IMR-90 (cell line): ENCODE measurements at regions of chr1 and their contacts with region 1.

Region 1: GRCh38 chr1:94335950-94336349 is 82.2 kb upstream of the ABCD3 start:
- DNase-seq: peak; percentile 95
- ATAC-seq: peak; percentile 89
- H3K4me3 ChIP-seq: no peak overlapping the region
- H3K27ac ChIP-seq: no peak overlapping the region
- H3K4me1 ChIP-seq: peaks cover 8% of the 10 kb centered on the region
- H3K27me3 ChIP-seq: peaks cover 16% of the 10 kb centered on the region
- CTCF ChIP-seq: peak; percentile 100
- POLR2A ChIP-seq: peak; percentile 58
- RAD21 ChIP-seq: peak; percentile 100

Region 2: DNA sequence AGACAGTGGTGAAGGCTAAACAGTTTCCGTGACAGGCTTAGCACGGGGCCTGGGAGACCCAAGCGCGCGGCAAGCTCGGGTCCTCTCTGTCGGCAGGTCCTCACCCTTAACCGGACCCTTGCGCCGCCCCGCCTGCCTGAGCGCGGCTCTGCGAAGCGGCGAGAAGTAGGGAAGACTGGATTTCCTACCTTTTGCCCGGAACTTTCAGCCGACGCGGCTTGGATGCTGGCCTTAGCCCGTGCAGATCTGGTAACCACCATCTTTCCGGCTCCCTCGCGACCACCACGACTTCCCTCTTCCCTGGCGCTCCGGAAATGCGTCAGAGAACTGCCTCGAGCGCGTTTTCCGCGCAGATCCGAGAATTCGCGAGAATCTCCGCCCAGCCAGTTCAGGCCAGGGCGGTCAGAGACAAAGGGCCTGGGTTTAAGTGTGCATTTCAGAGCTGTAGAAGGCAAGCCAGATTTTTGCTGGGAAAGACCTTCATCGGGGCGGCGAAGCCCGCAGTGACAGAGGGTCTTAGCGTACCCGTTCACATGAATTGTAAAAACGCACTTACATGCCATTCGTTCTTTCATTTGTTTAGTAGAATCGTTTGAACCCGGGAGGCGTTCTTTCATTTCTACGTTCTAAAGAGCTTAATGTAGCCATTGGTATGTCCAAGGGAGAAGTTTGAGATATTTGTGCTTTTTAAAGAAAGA is 456.9 kb before region 1 on chr1 and contains the start of gene DNTTIP2:
- CTCF ChIA-PET with region 1: no interaction called
- POLR2A ChIA-PET with region 1: interaction called, 3 read pairs
- dilution Hi-C with region 1: no loop called
- in situ Hi-C with region 1: loop called (anchors 25 kb)
- intact Hi-C with region 1: loop called (anchors 1 kb)
- DNase-seq: peak; percentile 87
- ATAC-seq: peak; percentile 94
- H3K4me3 ChIP-seq: peak within 1 kb of the TSS; percentile 89
- H3K27ac ChIP-seq: peak within 1 kb of the TSS; percentile 99
- H3K4me1 ChIP-seq: no peaks in the 10 kb centered on the region; the same call in 1 of the 2 replicates
- H3K27me3 ChIP-seq: no peaks in the 10 kb centered on the region
- CTCF ChIP-seq: no peak
- POLR2A ChIP-seq: peak; percentile 90
- RAD21 ChIP-seq: no peak
- total RNA-seq, gene DNTTIP2: 24.4 and 35.8 TPM in 2 replicates

Region 3: DNA sequence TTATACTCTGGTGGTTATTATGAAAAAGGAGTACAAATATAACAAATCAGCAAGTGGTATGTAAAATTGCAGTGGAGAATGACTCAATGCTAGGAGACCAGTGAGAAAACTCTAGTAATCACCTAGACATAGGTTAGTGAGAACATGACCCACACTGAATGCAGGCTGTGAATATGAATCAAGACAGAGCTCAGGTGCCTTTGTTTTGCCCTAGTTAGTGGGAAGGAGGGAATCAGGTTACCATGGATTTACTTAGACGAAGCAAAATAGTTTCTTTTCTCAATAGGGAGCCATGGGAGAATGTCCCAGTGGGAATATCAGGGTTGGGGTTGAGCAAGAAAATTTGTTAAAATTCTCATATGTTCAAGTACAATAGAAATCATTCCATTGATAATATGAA is 416.2 kb before region 1 on chr1:
- CTCF ChIA-PET with region 1: no interaction called
- POLR2A ChIA-PET with region 1: no interaction called
- dilution Hi-C with region 1: no loop called
- in situ Hi-C with region 1: no loop called
- intact Hi-C with region 1: no loop called
- DNase-seq: no peak
- ATAC-seq: no peak
- H3K4me3 ChIP-seq: no peak overlapping the region
- H3K27ac ChIP-seq: no peak overlapping the region
- H3K4me1 ChIP-seq: no peaks in the 10 kb centered on the region
- H3K27me3 ChIP-seq: peaks cover 8% of the 10 kb centered on the region
- CTCF ChIP-seq: no peak
- POLR2A ChIP-seq: no peak
- RAD21 ChIP-seq: no peak

Region 4: GRCh38 chr1:94025383-94026340 is 310.3 kb before region 1 on chr1:
- CTCF ChIA-PET with region 1: interaction called, 90 read pairs
- POLR2A ChIA-PET with region 1: no interaction called
- dilution Hi-C with region 1: no loop called
- in situ Hi-C with region 1: loop called (anchors 10 kb)
- intact Hi-C with region 1: loop called (anchors 1 kb)
- DNase-seq: peak; percentile 79
- ATAC-seq: peak; percentile 50
- H3K4me3 ChIP-seq: no peak overlapping the region
- H3K27ac ChIP-seq: no peak overlapping the region
- H3K4me1 ChIP-seq: peaks cover 15% of the 10 kb centered on the region
- H3K27me3 ChIP-seq: no peaks in the 10 kb centered on the region
- CTCF ChIP-seq: peak; percentile 83
- POLR2A ChIP-seq: no peak
- RAD21 ChIP-seq: peak; percentile 81

Region 5: GRCh38 chr1:94045465-94046056 is 290.4 kb before region 1 on chr1:
- CTCF ChIA-PET with region 1: interaction called, 64 read pairs
- POLR2A ChIA-PET with region 1: no interaction called
- dilution Hi-C with region 1: no loop called
- in situ Hi-C with region 1: no loop called
- intact Hi-C with region 1: loop called (anchors 1 kb)
- DNase-seq: peak; percentile 92
- ATAC-seq: peak; percentile 90
- H3K4me3 ChIP-seq: no peak overlapping the region
- H3K27ac ChIP-seq: peak overlapping the region; percentile 19
- H3K4me1 ChIP-seq: peaks cover 13% of the 10 kb centered on the region; the same call in 1 of the 2 replicates
- H3K27me3 ChIP-seq: no peaks in the 10 kb centered on the region
- CTCF ChIP-seq: peak; percentile 66
- POLR2A ChIP-seq: no peak
- RAD21 ChIP-seq: peak; percentile 49; the same call in 1 of the 2 replicates

Region 6: DNA sequence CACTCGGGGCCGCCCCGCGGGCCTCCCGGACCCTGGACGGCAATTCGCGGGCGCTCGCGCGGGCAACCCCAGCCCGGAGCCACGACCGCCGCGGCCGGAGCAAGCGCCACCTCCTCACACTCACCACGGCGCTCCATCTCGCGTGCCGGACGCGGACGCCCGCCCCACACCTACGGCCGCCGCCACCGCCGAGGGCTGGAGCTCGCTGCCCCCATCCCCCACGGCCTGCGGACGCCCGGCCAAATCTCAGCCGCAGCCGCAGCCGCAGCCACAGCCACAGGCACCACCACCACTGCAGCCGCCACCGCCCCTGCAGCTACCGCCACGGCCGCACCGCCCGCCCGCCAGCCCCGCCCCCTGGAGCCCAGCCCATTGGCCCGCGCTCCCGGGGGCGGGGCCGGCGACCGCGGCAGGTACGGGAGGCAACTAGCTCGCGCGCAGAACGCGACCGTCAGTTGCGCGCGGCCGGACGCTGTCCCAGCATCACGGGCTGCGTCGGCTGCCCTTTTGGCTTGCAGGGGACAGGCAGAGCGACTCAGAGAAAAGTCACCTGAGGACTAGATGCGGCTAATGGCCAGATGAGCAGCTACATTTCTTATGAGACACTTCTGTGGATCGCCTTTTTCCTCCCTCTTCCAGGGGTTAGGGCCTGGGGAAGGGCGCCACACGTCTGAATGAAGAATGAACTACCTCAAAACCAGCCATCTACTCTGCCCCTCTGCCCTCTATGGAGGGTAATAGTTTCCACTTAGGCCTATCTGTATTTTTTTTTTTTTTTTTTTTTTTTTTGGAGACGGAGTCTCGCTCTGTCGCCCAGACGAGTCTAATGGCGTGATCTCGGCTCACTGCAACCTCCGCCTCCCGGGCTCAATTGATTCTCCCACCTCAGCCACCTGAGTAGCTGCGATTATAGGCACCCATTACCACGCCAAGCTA is 98.4 kb before region 1 on chr1 and contains the start of gene ARHGAP29:
- CTCF ChIA-PET with region 1: interaction called, 9 read pairs
- POLR2A ChIA-PET with region 1: interaction called, 3 read pairs
- dilution Hi-C with region 1: no loop called
- in situ Hi-C with region 1: no loop called
- intact Hi-C with region 1: loop called (anchors 2 kb)
- DNase-seq: peak; percentile 50
- ATAC-seq: peak; percentile 96
- H3K4me3 ChIP-seq: peak within 1 kb of the TSS; percentile 60
- H3K27ac ChIP-seq: peak within 1 kb of the TSS; percentile 27
- H3K4me1 ChIP-seq: peaks cover 1% of the 10 kb centered on the region; the same call in 1 of the 2 replicates
- H3K27me3 ChIP-seq: no peaks in the 10 kb centered on the region; the same call in 1 of the 2 replicates
- CTCF ChIP-seq: no peak
- POLR2A ChIP-seq: no peak
- RAD21 ChIP-seq: no peak
- total RNA-seq, gene ARHGAP29: 30.3 and 45.3 TPM in 2 replicates

Region 7: GRCh38 chr1:94463765-94464330 is 127.9 kb after region 1 on chr1:
- CTCF ChIA-PET with region 1: interaction called, 16 read pairs
- POLR2A ChIA-PET with region 1: no interaction called
- dilution Hi-C with region 1: no loop called
- in situ Hi-C with region 1: no loop called
- intact Hi-C with region 1: loop called (anchors 1 kb)
- DNase-seq: peak; percentile 71
- ATAC-seq: peak; percentile 86
- H3K4me3 ChIP-seq: no peak overlapping the region
- H3K27ac ChIP-seq: no peak overlapping the region
- H3K4me1 ChIP-seq: no peaks in the 10 kb centered on the region; the same call in 1 of the 2 replicates
- H3K27me3 ChIP-seq: no peaks in the 10 kb centered on the region
- CTCF ChIP-seq: peak; percentile 74
- POLR2A ChIP-seq: no peak
- RAD21 ChIP-seq: peak; percentile 85